ENCODE measurements at regions of chr1 and their contacts with region 1.

Region 1: GRCh38 chr1:173420330-173420806 is 56.8 kb upstream of the PRDX6 start:
- DNase-seq: peak; percentile 43 to 87
- ATAC-seq: peak; percentile 82 to 94 (median 89)
- H3K4me3 ChIP-seq: no peak overlapping the region
- H3K4me3 Mint-ChIP-seq: peak overlapping the region; percentile 6
- H3K27ac ChIP-seq: no peak overlapping the region
- H3K27ac Mint-ChIP-seq: peak overlapping the region; percentile 34 to 69
- H3K4me1 ChIP-seq: peaks cover 7% of the 10 kb centered on the region
- H3K4me1 Mint-ChIP-seq: peaks cover 6 to 7% of the 10 kb centered on the region in 2 donors
- H3K27me3 ChIP-seq: no peaks in the 10 kb centered on the region
- H3K27me3 Mint-ChIP-seq: no peaks in the 10 kb centered on the region
- CTCF ChIP-seq: peak; percentile 91

Region 2: DNA sequence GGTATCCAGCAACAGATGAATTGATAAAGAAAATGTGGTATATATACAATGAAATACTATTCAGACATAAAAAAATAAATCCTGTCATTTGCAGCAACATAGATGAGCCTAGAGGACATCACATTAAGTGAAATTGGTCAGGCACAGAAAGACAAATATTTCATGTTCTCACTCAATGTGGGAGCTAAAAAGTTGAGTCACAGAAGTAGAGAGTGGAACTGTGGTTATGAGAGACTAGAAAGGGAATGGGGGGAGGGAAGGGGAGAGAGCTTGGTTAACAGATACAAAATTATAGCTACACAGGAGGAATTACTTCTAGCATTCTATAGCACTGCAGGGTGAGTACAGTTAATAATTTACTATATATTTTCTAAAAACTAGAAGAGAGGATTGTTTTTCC is 533.8 kb after region 1 on chr1:
- intact Hi-C with region 1: loop called (anchors 5 kb)
- DNase-seq: no peak
- ATAC-seq: no peak
- H3K4me3 ChIP-seq: no peak overlapping the region
- H3K4me3 Mint-ChIP-seq: no peak overlapping the region
- H3K27ac ChIP-seq: no peak overlapping the region
- H3K27ac Mint-ChIP-seq: no peak overlapping the region
- H3K4me1 ChIP-seq: no peaks in the 10 kb centered on the region
- H3K4me1 Mint-ChIP-seq: peaks cover 0 to 5% of the 10 kb centered on the region in 2 donors
- H3K27me3 ChIP-seq: no peaks in the 10 kb centered on the region
- H3K27me3 Mint-ChIP-seq: no peaks in the 10 kb centered on the region
- CTCF ChIP-seq: no peak

Region 3: DNA sequence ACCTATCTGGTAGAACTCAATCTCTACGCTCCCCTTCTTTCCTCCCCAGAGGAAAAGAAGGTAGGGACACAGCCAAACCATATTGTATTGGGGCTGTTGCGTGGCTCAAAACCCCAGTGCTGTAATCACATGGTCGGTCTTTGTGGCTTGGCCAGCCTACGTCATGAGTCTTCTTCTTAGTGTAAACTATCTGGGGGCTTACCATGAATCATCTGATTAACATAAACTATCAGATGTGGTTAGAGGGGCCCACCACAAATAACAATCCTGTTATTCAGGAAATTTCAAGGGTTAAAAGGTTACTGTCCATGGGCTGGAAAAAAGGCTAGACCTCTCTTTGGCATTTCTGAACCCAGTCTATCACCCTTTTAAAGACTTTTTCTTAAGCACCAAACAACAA is 977.9 kb after region 1 on chr1:
- intact Hi-C with region 1: no loop called
- DNase-seq: no peak
- ATAC-seq: no peak
- H3K4me3 ChIP-seq: no peak overlapping the region
- H3K4me3 Mint-ChIP-seq: no peak overlapping the region
- H3K27ac ChIP-seq: no peak overlapping the region
- H3K27ac Mint-ChIP-seq: no peak overlapping the region
- H3K4me1 ChIP-seq: peaks cover 7% of the 10 kb centered on the region
- H3K4me1 Mint-ChIP-seq: peaks cover 22 to 23% of the 10 kb centered on the region in 2 donors
- H3K27me3 ChIP-seq: no peaks in the 10 kb centered on the region
- H3K27me3 Mint-ChIP-seq: no peaks in the 10 kb centered on the region
- CTCF ChIP-seq: no peak